Left ventricle myocardium inferior (tissue), 1 donor: ENCODE measurements at regions of chr7 and their contacts with region 1.

Region 1: DNA sequence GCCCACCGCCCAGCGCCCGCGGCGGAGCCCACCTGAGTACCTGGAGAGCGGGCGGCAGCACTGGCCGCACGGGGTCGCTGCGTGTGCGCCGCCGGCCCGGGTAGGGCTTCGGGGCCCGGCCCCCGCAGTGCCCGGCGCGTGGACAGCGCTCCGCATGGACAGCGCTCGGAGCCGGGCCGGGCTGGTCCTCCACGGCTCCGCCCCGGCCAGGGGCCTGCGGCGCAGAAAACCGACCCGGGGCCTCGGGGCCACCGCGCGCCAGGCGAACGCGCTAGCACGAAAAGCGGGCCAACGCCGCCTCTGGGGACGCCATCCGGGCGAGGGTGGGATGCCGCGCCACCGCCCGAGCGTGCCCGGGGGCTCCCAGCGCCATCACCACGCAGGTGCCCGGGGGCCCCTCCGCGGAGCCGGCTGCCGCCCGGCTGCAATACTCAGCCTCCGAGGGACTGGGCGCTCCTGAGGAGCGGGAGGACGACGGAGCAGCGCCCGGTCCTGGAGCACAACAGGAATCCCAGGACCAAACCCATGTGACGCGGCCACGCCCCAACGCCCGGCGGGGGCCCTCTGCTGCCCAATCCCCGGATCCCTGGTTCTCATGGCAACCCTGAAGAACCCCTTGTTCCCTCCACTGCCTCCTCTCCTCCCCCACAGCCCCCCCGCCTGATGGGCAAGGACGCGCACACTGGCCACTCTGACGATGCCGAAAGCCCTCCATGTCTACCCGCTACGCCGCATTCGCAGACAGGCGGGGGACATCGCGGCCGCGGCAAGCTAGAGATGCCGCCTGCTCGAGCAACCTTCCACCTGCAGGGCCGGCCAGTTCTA is at the start of gene GRB10:
- DNase-seq: peak; percentile 52
- H3K4me3 ChIP-seq: peak within 1 kb of the TSS; percentile 73
- H3K27ac ChIP-seq: peak within 1 kb of the TSS; percentile 39
- H3K4me1 ChIP-seq: peaks cover 75% of the 10 kb centered on the region
- H3K27me3 ChIP-seq: no peaks in the 10 kb centered on the region
- CTCF ChIP-seq: peak; percentile 51
- total RNA-seq, gene GRB10: 40.6 TPM

Region 2: DNA sequence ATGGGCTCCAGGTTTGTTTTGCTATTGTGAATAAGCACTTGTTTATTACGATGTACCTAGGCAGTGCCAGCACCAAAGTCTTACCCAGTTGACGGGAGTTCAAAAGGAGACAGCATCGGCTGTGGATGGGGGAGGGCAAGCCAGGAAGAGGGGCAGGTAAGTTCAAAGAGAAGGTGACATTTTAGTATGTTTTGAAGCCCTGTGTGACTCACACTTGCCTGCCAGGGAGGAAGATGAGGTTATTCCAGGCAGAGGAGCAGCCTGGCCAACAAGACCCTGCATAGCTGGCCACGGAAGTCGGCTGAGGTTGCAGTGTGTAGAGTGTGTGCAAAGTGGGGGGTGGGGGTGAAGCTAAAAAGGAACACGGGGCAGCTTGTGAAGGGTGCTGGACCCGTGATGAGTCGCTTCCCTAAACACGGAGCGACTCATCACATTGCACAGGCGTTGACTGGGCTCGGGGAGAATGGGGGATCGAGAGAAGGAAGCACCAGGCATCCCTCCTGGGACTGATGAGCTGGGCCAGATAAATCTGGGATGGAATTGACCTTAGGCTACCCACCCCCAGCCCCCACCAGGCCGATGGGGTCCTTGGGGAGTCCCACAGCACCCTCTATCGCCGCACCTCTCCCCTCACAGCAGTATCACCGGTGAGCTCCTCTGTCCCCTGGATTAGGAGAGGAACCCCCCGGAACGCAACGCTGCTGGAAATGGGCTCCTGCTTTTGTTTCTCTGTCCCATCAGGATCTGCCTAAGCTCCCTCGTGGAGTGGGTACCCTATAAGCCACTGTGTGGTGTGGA is 575.9 kb before region 1 on chr7:
- intact Hi-C with region 1: no loop called
- DNase-seq: no peak
- H3K4me3 ChIP-seq: no peak overlapping the region
- H3K27ac ChIP-seq: no peak overlapping the region
- H3K4me1 ChIP-seq: peaks cover 2% of the 10 kb centered on the region
- H3K27me3 ChIP-seq: peaks cover 61% of the 10 kb centered on the region
- CTCF ChIP-seq: no peak

Region 3: GRCh38 chr7:50711257-50712175 is 71.1 kb before region 1 on chr7:
- intact Hi-C with region 1: loop called (anchors 10 kb)
- DNase-seq: peak; percentile 43
- H3K4me3 ChIP-seq: no peak overlapping the region
- H3K27ac ChIP-seq: no peak overlapping the region
- H3K4me1 ChIP-seq: peaks cover 95% of the 10 kb centered on the region
- H3K27me3 ChIP-seq: no peaks in the 10 kb centered on the region
- CTCF ChIP-seq: no peak